Mammary epithelial cell (primary cell): ENCODE measurements at regions of chr12 and their contacts with region 1.

Region 1: DNA sequence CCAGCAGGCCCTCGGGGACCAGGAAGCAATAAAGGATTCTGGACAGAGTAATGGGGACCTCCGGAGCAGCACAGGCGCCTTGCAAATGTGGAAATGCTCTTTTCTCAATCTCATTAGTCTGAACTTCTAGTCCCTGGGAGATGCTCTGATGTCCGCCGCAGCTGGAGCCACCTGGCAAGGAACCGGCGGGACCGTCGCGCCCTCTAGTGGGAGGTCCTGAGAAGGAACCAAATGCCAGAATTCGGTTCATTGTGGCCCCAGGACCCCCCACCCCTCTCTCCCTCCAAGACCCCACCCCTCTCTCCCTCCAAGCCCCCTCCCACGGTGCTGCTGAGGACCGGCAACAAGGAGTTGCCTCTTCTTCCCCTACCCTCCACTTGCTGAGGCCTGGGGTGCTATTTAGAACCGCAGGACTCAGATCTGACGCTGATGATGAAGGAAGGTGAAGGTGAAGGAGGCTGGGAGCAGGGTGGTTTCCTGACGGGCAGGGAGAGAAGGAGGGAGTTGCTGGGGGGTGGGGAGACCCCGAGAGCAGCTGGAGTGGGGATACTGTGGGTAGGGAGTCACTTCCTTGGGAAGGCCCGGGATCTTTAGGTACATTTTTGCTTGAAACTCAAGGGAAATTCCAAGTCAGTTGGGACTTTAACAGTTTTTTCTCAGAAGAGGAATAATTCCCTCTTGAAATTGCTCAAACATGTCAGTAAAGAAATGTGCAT is 42.5 kb downstream of the SMIM41 start:
- DNase-seq: no peak
- H3K4me3 ChIP-seq: no peak overlapping the region
- H3K27ac ChIP-seq: no peak overlapping the region
- H3K4me1 ChIP-seq: peaks cover 5% of the 10 kb centered on the region
- H3K27me3 ChIP-seq: no peaks in the 10 kb centered on the region
- CTCF ChIP-seq: peak; percentile 69 to 82

Region 2: DNA sequence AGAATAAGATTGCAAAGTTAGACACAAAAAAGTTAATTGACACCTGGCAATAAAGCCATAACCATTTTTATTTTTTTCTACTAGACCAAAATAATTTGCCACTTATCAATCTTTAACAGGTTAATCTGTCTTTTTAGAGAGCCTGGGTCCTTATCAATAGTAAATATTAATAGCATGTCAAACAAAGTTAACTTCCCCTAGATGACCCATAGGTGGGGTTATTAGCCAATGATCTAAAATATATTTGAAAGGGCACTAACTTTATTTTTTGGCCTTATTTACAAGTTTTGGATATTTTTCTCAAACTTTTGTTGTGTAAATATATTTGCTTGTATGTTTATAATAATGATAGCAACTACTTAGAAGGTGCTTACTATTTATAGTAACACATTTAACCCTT is 230.1 kb before region 1 on chr12:
- CTCF ChIA-PET with region 1: no interaction called
- dilution Hi-C with region 1: no loop called
- in situ Hi-C with region 1: no loop called
- intact Hi-C with region 1: loop called (anchors 10 kb)
- DNase-seq: no peak
- H3K4me3 ChIP-seq: no peak overlapping the region
- H3K27ac ChIP-seq: no peak overlapping the region
- H3K4me1 ChIP-seq: no peaks in the 10 kb centered on the region
- H3K27me3 ChIP-seq: no peaks in the 10 kb centered on the region
- CTCF ChIP-seq: peak; percentile 24 to 40

Region 3: GRCh38 chr12:51994959-51995358 is 127.0 kb before region 1 on chr12:
- CTCF ChIA-PET with region 1: interaction called, 3 read pairs
- dilution Hi-C with region 1: no loop called
- in situ Hi-C with region 1: no loop called
- intact Hi-C with region 1: loop called (anchors 2 kb)
- DNase-seq: no peak
- H3K4me3 ChIP-seq: no peak overlapping the region
- H3K27ac ChIP-seq: no peak overlapping the region
- H3K4me1 ChIP-seq: no peaks in the 10 kb centered on the region
- H3K27me3 ChIP-seq: no peaks in the 10 kb centered on the region
- CTCF ChIP-seq: no peak

Region 4: GRCh38 chr12:52082988-52083637 is 38.9 kb before region 1 on chr12:
- CTCF ChIA-PET with region 1: interaction called, 3 read pairs
- dilution Hi-C with region 1: no loop called
- in situ Hi-C with region 1: loop called in 1 of 2 experiments (anchors 5 kb)
- intact Hi-C with region 1: no loop called
- DNase-seq: no peak
- H3K4me3 ChIP-seq: no peak overlapping the region
- H3K27ac ChIP-seq: no peak overlapping the region
- H3K4me1 ChIP-seq: peaks cover 5% of the 10 kb centered on the region
- H3K27me3 ChIP-seq: no peaks in the 10 kb centered on the region
- CTCF ChIP-seq: peak; percentile 98 to 99